ENCODE measurements at regions of chr2 and their contacts with region 1.

Region 1: DNA sequence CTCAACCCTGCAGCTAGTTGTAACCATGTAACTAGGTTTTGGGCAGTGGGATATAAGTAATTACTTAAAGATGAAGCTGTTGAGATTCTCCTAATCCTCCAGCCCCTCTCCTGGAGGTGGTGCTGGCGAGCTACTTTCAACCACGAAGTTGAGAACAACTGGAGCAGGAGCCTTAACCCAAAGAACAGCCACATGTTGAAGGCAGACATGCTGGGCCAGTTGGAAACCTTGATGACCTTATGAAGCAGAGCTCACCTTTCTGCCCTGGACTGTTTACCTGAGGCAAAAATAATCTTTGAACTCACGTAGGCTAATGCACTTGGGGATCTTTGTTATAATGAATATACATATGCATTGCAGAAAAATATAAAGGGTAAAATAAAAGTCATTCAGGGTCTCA is 89.6 kb upstream of the NPAS2 start:
- DNase-seq: peak; percentile 38 to 82
- ATAC-seq: peak; percentile 51 to 87; a peak in 3 of 6 replicates
- H3K4me3 ChIP-seq: no peak overlapping the region
- H3K27ac ChIP-seq: peak overlapping the region; percentile 23 to 85; a peak in 4 of 6 replicates
- H3K4me1 ChIP-seq: peaks cover 34% of the 10 kb centered on the region
- CTCF ChIP-seq: peak; percentile 69
- EP300 ChIP-seq: no peak
- POLR2A ChIP-seq: no peak
- RAD21 ChIP-seq: peak; percentile 90 to 95

Region 2: DNA sequence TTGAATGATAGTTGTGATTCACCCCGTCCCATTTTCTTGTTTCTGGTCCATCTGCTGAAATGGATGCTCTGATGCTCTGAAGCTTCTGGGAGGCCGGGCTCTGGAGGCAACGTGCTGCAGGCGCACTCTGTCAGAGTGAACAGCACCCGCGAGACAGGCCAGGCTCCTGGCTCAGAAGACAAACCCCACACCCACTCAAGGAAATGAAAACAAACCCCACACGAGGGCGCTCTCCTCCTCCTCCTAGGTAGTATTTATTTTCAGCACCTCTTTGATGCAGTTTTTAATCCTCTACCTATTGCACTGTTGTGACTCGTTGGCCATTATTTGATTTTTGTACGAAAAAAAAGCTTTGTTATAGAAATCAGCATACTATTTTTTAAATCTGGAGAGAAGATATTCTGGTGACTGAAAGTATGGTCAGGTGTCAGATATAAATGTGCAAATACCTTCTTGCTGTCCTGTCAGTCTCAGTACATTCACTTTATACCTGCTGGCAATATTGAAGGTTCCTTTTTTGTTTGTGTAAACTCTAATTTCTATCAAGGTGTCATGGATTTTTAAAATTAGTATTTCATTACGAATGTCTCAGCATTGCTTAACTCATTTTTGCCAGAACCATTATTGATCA is 302.6 kb before region 1 on chr2:
- CTCF ChIA-PET with region 1: no interaction called
- POLR2A ChIA-PET with region 1: no interaction called
- DNase-seq: peak in 1 of 2 experiments; percentile 59
- ATAC-seq: peak; percentile 72 to 86; a peak in 4 of 6 replicates
- H3K4me3 ChIP-seq: no peak overlapping the region
- H3K27ac ChIP-seq: no peak overlapping the region
- H3K4me1 ChIP-seq: no peaks in the 10 kb centered on the region
- CTCF ChIP-seq: peak; percentile 52
- EP300 ChIP-seq: no peak
- POLR2A ChIP-seq: no peak
- RAD21 ChIP-seq: peak; percentile 42 to 53; a peak in 4 of 5 replicates

Region 3: GRCh38 chr2:100902833-100903405 is 172.6 kb after region 1 on chr2:
- CTCF ChIA-PET with region 1: interaction called, 12 read pairs
- POLR2A ChIA-PET with region 1: no interaction called
- DNase-seq: peak; percentile 94
- ATAC-seq: peak; percentile 95 to 97
- H3K4me3 ChIP-seq: no peak overlapping the region
- H3K27ac ChIP-seq: peak overlapping the region; percentile 97
- H3K4me1 ChIP-seq: peaks cover 66% of the 10 kb centered on the region
- CTCF ChIP-seq: no peak
- EP300 ChIP-seq: peak; percentile 89; a peak in 3 of 5 replicates
- POLR2A ChIP-seq: no peak
- RAD21 ChIP-seq: peak; percentile 29 to 60; a peak in 4 of 5 replicates

Region 4: DNA sequence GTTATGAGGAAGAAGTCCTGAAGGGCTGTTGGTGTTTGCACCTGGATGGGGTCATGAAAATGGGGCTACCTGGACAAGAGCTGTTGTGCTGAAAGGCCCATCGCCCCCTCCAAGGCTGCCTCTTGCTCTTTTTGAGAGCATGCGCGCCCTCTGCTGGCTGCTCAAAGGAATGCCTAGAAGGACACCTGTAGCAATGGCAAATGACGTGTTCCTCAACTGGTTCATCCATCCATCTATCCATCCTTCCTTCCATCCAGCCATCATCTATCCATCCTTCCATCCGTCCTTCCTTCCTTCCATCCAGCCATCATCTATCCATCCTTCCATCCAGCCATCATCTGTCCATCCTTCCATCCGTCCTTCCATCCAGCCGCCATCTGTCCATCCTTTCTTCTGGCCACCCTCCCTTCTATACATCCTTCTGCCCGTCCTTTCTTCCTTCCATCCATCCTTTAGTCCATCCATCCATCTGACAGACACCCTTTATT is 254.6 kb after region 1 on chr2:
- CTCF ChIA-PET with region 1: interaction called, 41 read pairs
- POLR2A ChIA-PET with region 1: no interaction called
- DNase-seq: peak; percentile 57 to 82
- ATAC-seq: peak; percentile 57 to 86; a peak in 4 of 6 replicates
- H3K4me3 ChIP-seq: no peak overlapping the region
- H3K27ac ChIP-seq: peak overlapping the region; percentile 57 to 61; a peak in 4 of 6 replicates
- H3K4me1 ChIP-seq: peaks cover 13% of the 10 kb centered on the region
- CTCF ChIP-seq: peak; percentile 94
- EP300 ChIP-seq: no peak
- POLR2A ChIP-seq: no peak
- RAD21 ChIP-seq: peak; percentile 96 to 97

Measured in A549 (cell line).